Panc1 (cell line): ENCODE measurements at regions of chr10 and their contacts with region 1.

Region 1: DNA sequence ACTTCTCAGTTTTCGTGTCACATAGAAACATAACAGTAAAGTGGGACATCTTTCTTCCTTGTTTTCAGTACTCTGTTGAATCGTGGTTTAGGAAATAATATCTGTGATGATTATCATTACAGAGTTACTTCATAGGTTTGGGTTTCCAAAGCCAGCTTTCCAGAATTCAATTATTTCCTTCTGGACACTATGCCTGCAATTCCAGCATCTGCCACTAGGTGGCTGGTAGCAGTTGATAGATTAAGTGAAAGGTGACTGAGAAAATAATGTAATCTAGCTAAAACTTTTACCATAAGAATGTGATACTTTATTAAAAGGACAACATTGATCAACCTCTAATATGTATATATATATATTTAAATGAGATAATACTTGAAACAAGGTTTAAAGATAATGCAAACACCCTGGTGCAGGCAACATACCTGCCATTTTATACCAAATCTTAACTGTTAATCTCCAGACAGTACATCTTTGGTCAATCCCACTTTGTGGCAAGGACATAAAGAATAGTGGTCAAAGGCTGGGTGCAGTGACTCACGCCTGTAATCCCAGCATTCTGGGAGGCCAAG is 102.6 kb downstream of the SH3PXD2A start:
- DNase-seq: no peak
- ATAC-seq: no peak
- H3K4me3 ChIP-seq: no peak overlapping the region
- H3K27ac ChIP-seq: no peak overlapping the region
- H3K4me1 ChIP-seq: peaks cover 12% of the 10 kb centered on the region
- H3K27me3 ChIP-seq: no peaks in the 10 kb centered on the region
- CTCF ChIP-seq: peak; percentile 87

Region 2: DNA sequence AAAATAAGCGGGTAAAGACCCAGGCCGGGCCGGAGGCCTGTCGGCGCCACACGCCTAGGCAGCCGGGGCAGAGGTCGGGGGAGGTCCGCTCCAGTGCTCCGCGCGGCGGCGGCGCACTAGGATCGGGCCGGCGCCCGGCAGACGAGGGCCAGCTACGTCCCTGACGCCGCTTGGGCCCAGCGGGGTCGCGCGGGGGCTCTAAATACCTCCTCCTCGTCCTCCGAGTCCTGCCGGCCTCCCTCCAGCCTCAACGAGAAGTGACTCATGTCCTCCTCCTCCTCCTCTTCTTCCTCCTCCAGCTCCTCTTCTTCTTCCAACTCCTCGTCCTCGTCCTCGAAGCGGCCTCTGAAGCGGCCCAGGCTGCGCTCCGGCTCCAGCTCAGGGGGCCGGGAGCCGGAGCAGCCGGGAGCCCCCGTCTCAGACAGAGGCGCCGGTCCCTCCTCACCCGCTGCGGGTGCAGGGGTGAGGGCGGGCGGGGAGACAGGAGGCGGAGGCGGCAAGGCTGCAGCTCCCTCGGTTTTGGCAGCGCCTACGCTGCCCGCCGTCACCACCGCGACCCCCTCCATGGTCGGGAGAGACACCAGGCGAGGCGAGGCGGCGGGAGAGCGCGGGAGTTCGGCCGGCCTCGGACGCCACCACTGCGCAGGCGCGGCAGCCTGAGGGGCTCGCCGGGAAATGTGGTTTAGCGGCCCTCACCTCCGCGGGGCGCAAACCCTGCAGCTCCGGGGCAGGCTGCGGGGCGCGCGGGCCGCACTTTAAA is 402.1 kb before region 1 on chr10 and contains the start of gene PCGF6:
- CTCF ChIA-PET with region 1: no interaction called
- POLR2A ChIA-PET with region 1: no interaction called
- in situ Hi-C with region 1: no loop called
- intact Hi-C with region 1: no loop called
- DNase-seq: no peak
- ATAC-seq: peak; percentile 97
- H3K4me3 ChIP-seq: peak within 1 kb of the TSS; percentile 66 to 80
- H3K27ac ChIP-seq: peak within 1 kb of the TSS; percentile 82
- H3K4me1 ChIP-seq: peaks cover 4% of the 10 kb centered on the region; the same call in 1 of the 2 replicates
- H3K27me3 ChIP-seq: no peaks in the 10 kb centered on the region
- CTCF ChIP-seq: no peak
- total RNA-seq, gene PCGF6: 18.0 TPM

Region 3: GRCh38 chr10:103712570-103713498 is 39.9 kb before region 1 on chr10:
- CTCF ChIA-PET with region 1: no interaction called
- POLR2A ChIA-PET with region 1: no interaction called
- in situ Hi-C with region 1: no loop called
- intact Hi-C with region 1: no loop called
- DNase-seq: peak; percentile 67
- ATAC-seq: peak; percentile 84
- H3K4me3 ChIP-seq: no peak overlapping the region
- H3K27ac ChIP-seq: no peak overlapping the region
- H3K4me1 ChIP-seq: peaks cover 4% of the 10 kb centered on the region; the same call in 1 of the 2 replicates
- H3K27me3 ChIP-seq: no peaks in the 10 kb centered on the region
- CTCF ChIP-seq: peak; percentile 91

Region 4: GRCh38 chr10:103789141-103789540 is 36.4 kb after region 1 on chr10:
- CTCF ChIA-PET with region 1: interaction called, 10 read pairs
- POLR2A ChIA-PET with region 1: interaction called, 5 read pairs
- in situ Hi-C with region 1: no loop called
- intact Hi-C with region 1: no loop called
- DNase-seq: no peak
- ATAC-seq: no peak
- H3K4me3 ChIP-seq: no peak overlapping the region
- H3K27ac ChIP-seq: no peak overlapping the region
- H3K4me1 ChIP-seq: peaks cover 7% of the 10 kb centered on the region
- H3K27me3 ChIP-seq: no peaks in the 10 kb centered on the region
- CTCF ChIP-seq: no peak

Region 5: GRCh38 chr10:103966671-103967447 is 214.1 kb after region 1 on chr10 and contains the start of gene SLK:
- CTCF ChIA-PET with region 1: no interaction called
- POLR2A ChIA-PET with region 1: no interaction called
- in situ Hi-C with region 1: no loop called
- intact Hi-C with region 1: no loop called
- DNase-seq: peak; percentile 24
- ATAC-seq: peak; percentile 90
- H3K4me3 ChIP-seq: peak within 1 kb of the TSS; percentile 95 to 99
- H3K27ac ChIP-seq: peak within 1 kb of the TSS; percentile 97
- H3K4me1 ChIP-seq: peaks cover 16% of the 10 kb centered on the region
- H3K27me3 ChIP-seq: no peaks in the 10 kb centered on the region
- CTCF ChIP-seq: no peak
- total RNA-seq, gene SLK: 40.8 TPM